Natural killer cell (primary cell): ENCODE measurements at regions of chr5 and their contacts with region 1.

Region 1: DNA sequence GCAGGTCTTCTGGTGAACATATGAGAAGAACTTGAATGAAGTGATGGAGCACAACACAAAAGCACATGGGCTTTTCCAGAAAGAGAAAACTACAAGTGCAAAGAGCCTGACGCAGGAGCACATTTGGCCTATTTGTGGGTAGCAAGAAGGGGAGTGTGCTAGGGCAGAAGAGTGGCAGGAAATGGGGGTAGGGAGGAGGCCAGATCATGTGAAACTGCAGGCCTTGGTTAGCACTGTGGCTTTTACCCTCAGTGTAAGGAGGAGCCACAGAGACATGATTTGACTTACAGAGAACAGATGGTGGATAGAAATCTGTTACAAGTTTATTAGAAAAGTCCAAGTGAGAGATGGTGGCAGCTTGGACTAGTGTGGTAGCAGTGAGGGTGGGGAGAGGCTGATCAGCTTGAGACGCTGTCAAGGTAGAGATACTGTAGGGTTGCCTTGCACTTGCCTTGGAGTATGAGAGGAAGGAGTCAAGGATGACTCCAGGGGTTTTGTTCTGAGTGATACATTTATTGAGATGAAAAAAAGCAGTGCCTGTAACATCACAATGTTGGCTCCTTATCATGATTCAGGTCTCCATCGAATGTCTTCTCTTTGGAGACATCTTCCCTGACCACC is 126.7 kb downstream of the PPP2R2B start:
- DNase-seq: peak; percentile 70 to 87
- ATAC-seq: peak; percentile 91 to 98 (median 96)
- H3K4me3 ChIP-seq: no peak overlapping the region
- H3K4me3 Mint-ChIP-seq: peak overlapping the region; percentile 81
- H3K27ac ChIP-seq: peak overlapping the region; percentile 86
- H3K27ac Mint-ChIP-seq: peak overlapping the region; percentile 91 to 96
- H3K4me1 ChIP-seq: peaks cover 43% of the 10 kb centered on the region
- H3K4me1 Mint-ChIP-seq: peaks cover 61 to 62% of the 10 kb centered on the region in 2 donors
- H3K27me3 ChIP-seq: no peaks in the 10 kb centered on the region
- H3K27me3 Mint-ChIP-seq: no peaks in the 10 kb centered on the region
- CTCF ChIP-seq: no peak

Region 2: GRCh38 chr5:146722361-146722791 is 29.5 kb before region 1 on chr5:
- intact Hi-C with region 1: no loop called
- DNase-seq: no peak
- ATAC-seq: no peak
- H3K4me3 ChIP-seq: no peak overlapping the region
- H3K4me3 Mint-ChIP-seq: no peak overlapping the region
- H3K27ac ChIP-seq: no peak overlapping the region
- H3K27ac Mint-ChIP-seq: peak overlapping the region in 1 of 2 donors; percentile 30
- H3K4me1 ChIP-seq: no peaks in the 10 kb centered on the region
- H3K4me1 Mint-ChIP-seq: peaks cover 41 to 44% of the 10 kb centered on the region in 2 donors
- H3K27me3 ChIP-seq: no peaks in the 10 kb centered on the region
- H3K27me3 Mint-ChIP-seq: no peaks in the 10 kb centered on the region
- CTCF ChIP-seq: no peak

Region 3: GRCh38 chr5:146765089-146765832 is 13.4 kb after region 1 on chr5:
- intact Hi-C with region 1: loop called (anchors 1 kb)
- DNase-seq: peak in 1 of 2 donors; percentile 65
- ATAC-seq: peak; percentile 93 to 98 (median 96)
- H3K4me3 ChIP-seq: no peak overlapping the region
- H3K4me3 Mint-ChIP-seq: peak overlapping the region; percentile 80
- H3K27ac ChIP-seq: peak overlapping the region; percentile 84
- H3K27ac Mint-ChIP-seq: peak overlapping the region; percentile 90 to 96
- H3K4me1 ChIP-seq: peaks cover 10% of the 10 kb centered on the region
- H3K4me1 Mint-ChIP-seq: peaks cover 53 to 56% of the 10 kb centered on the region in 2 donors
- H3K27me3 ChIP-seq: no peaks in the 10 kb centered on the region
- H3K27me3 Mint-ChIP-seq: no peaks in the 10 kb centered on the region
- CTCF ChIP-seq: no peak

Region 4: GRCh38 chr5:146794326-146795029 is 42.6 kb after region 1 on chr5:
- intact Hi-C with region 1: loop called (anchors 1 kb)
- DNase-seq: peak in 1 of 2 donors; percentile 12
- ATAC-seq: peak; percentile 54 to 66 (median 56)
- H3K4me3 ChIP-seq: no peak overlapping the region
- H3K4me3 Mint-ChIP-seq: peak overlapping the region; percentile 79
- H3K27ac ChIP-seq: peak overlapping the region; percentile 14
- H3K27ac Mint-ChIP-seq: peak overlapping the region; percentile 79 to 84
- H3K4me1 ChIP-seq: peaks cover 12% of the 10 kb centered on the region
- H3K4me1 Mint-ChIP-seq: peaks cover 77 to 93% of the 10 kb centered on the region in 2 donors
- H3K27me3 ChIP-seq: no peaks in the 10 kb centered on the region
- H3K27me3 Mint-ChIP-seq: no peaks in the 10 kb centered on the region
- CTCF ChIP-seq: no peak

Region 5: DNA sequence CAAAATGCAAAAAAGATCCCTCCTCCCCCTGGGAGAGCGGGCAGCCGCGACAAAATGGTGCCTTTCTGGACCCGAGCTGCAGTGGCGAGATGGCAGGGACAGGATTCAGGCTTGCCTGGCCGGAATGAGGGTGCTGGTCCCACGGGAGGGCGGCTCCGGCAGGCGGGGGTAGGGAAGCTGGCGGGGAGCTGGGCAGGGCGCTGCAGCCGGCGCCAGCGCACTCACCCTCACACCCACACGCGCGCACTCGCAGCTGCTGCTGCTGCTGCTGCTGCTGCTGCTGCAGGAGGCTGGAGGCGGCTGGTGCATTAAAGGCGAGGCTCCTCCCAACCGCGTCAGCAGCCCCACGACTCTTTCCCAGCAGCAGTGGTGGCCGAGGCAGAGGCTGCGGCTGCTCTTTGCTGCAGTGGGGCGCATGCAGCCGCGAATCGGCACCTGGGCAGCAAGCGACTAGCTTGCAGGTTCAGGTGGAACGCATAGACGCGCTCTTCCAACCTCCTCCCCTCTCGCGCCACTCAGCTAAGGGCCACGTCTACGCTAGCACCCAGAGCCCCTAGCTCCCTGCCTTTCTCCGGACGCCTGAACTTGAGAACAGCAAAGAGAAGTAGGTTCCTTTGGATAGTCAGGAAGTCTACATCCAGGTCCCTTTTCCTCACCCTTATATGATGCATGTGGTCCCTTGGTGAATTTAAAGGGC is 126.7 kb after region 1 on chr5 and contains the start of gene PPP2R2B:
- intact Hi-C with region 1: loop called (anchors 5 kb)
- DNase-seq: peak in 1 of 2 donors; percentile 70
- ATAC-seq: peak; percentile 75 to 80 (median 76)
- H3K4me3 ChIP-seq: peak within 1 kb of the TSS; percentile 62
- H3K4me3 Mint-ChIP-seq: peak within 1 kb of the TSS; percentile 96
- H3K27ac ChIP-seq: peak within 1 kb of the TSS; percentile 52
- H3K27ac Mint-ChIP-seq: peak within 1 kb of the TSS; percentile 27 to 73
- H3K4me1 ChIP-seq: peaks cover 10% of the 10 kb centered on the region
- H3K4me1 Mint-ChIP-seq: peaks cover 37 to 43% of the 10 kb centered on the region in 2 donors
- H3K27me3 ChIP-seq: no peaks in the 10 kb centered on the region
- H3K27me3 Mint-ChIP-seq: peaks cover 0 to 4% of the 10 kb centered on the region in 2 donors
- CTCF ChIP-seq: no peak
- total RNA-seq, gene PPP2R2B: 44.9 to 68.3 (median 63.7) TPM

Region 6: GRCh38 chr5:146890733-146891440 is 139.0 kb after region 1 on chr5:
- intact Hi-C with region 1: loop called (anchors 5 kb)
- DNase-seq: no peak
- ATAC-seq: no peak
- H3K4me3 ChIP-seq: no peak overlapping the region
- H3K4me3 Mint-ChIP-seq: peak overlapping the region; percentile 29
- H3K27ac ChIP-seq: no peak overlapping the region
- H3K27ac Mint-ChIP-seq: peak overlapping the region; percentile 4 to 14
- H3K4me1 ChIP-seq: peaks cover 7% of the 10 kb centered on the region
- H3K4me1 Mint-ChIP-seq: peaks cover 41 to 46% of the 10 kb centered on the region in 2 donors
- H3K27me3 ChIP-seq: no peaks in the 10 kb centered on the region
- H3K27me3 Mint-ChIP-seq: peaks cover 0 to 2% of the 10 kb centered on the region in 2 donors
- CTCF ChIP-seq: no peak